SK-N-SH (cell line): ENCODE measurements at regions of chrX and their contacts with region 1.

Region 1: GRCh38 chrX:152601848-152602612 is 35.7 kb upstream of the GABRQ start:
- DNase-seq: peak; percentile 6
- H3K4me3 ChIP-seq: no peak overlapping the region
- H3K27ac ChIP-seq: no peak overlapping the region
- H3K4me1 ChIP-seq: no peaks in the 10 kb centered on the region
- H3K27me3 ChIP-seq: no peaks in the 10 kb centered on the region
- CTCF ChIP-seq: peak; percentile 38
- EP300 ChIP-seq: no peak
- RAD21 ChIP-seq: peak; percentile 29

Region 2: DNA sequence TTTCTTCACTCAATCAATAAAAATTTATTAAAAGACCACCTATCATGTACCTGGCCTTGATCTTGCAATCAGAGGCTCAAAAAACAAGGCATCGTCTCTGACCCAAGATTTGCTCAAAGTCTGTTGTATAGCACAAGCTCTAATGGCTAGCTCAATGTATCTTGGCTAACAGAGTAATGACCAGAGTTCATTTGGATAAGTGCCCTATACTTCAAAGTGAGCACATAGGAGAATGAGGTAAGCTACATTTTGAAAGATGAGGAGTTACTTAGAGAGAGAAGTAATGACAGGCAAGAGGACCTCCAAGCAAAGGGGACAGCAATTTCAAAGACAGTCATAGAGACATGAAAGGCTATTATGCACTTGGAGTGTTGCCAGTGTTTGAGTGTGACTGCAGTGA is 12.8 kb after region 1 on chrX:
- CTCF ChIA-PET with region 1: interaction called, 11 read pairs
- POLR2A ChIA-PET with region 1: no interaction called
- DNase-seq: no peak
- H3K4me3 ChIP-seq: no peak overlapping the region
- H3K27ac ChIP-seq: no peak overlapping the region
- H3K4me1 ChIP-seq: no peaks in the 10 kb centered on the region
- H3K27me3 ChIP-seq: no peaks in the 10 kb centered on the region
- CTCF ChIP-seq: no peak
- EP300 ChIP-seq: no peak
- RAD21 ChIP-seq: no peak